AG04450 (cell line): ENCODE measurements at regions of chr3 and their contacts with region 1.

Region 1: GRCh38 chr3:9422712-9423424 is 25.5 kb downstream of the SETD5 start:
- DNase-seq: peak; percentile 92
- H3K4me3 ChIP-seq: peak overlapping the region; percentile 14; the same call in 1 of the 2 replicates
- H3K27ac ChIP-seq: peak overlapping the region; percentile 94
- H3K27me3 ChIP-seq: no peaks in the 10 kb centered on the region
- CTCF ChIP-seq: peak; percentile 67

Region 2: GRCh38 chr3:9476935-9477334 is 54.1 kb after region 1 on chr3:
- CTCF ChIA-PET with region 1: no interaction called
- POLR2A ChIA-PET with region 1: interaction called, 11 read pairs
- DNase-seq: no peak
- H3K4me3 ChIP-seq: no peak overlapping the region
- H3K27ac ChIP-seq: no peak overlapping the region
- H3K27me3 ChIP-seq: no peaks in the 10 kb centered on the region
- CTCF ChIP-seq: no peak